Activated naive CD8-positive, alpha-beta T cell treated with anti-CD3 and anti-CD28 coated beads, Interleukin-2, amount 10 ng/mL, durations not matched to agents 7 days and 5 days (primary cell): ENCODE measurements at regions of chr11 and their contacts with region 1.

Region 1: GRCh38 chr11:61332797-61333549 is at the starts of genes DDB1 and TKFC:
- DNase-seq: peak; percentile 99
- ATAC-seq: peak; percentile 93
- H3K4me3 Mint-ChIP-seq: peak within 1 kb of the TSS; percentile 98
- H3K27ac Mint-ChIP-seq: peak within 1 kb of the TSS; percentile 99
- H3K4me1 Mint-ChIP-seq: peaks cover 59% of the 10 kb centered on the region
- H3K27me3 Mint-ChIP-seq: no peaks in the 10 kb centered on the region
- total RNA-seq, gene DDB1: 168 to 181 TPM
- total RNA-seq, gene TKFC: 31.5 to 34.3 TPM

Region 2: DNA sequence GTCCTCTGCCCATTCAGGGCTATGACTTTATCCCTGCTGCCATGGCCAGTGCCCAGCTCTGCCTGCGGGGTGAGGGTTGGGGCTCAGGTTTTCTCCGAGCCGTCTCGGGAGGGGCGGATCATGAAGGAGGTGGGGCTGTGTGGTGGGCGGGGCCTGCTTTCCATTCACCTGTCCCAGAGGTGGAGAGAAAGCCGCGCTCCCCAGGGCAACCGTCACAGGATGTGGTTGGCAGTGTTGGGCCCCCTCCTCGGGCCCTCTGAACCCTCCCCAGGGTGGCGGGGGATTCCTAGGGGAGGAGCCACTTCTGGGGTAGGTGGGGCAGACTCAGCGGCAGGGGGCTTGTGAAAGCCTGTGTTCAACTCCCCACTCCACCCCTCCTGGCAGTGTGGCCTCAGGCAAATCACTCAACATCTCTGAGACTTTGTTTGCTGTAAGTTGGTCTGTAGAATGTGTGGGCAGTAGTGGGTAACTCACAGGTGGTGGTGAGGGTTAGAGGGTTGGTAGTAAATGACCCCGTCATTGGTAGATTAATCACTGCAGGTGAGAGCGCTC is 311.2 kb before region 1 on chr11:
- POLR2A ChIA-PET with region 1: no interaction called
- DNase-seq: peak; percentile 80
- ATAC-seq: peak; percentile 51
- H3K4me3 Mint-ChIP-seq: peak overlapping the region; percentile 70
- H3K27ac Mint-ChIP-seq: peak overlapping the region; percentile 90
- H3K4me1 Mint-ChIP-seq: peaks cover 67% of the 10 kb centered on the region
- H3K27me3 Mint-ChIP-seq: no peaks in the 10 kb centered on the region

Region 3: GRCh38 chr11:61071208-61071681 is 261.7 kb before region 1 on chr11:
- POLR2A ChIA-PET with region 1: no interaction called
- DNase-seq: peak; percentile 78
- ATAC-seq: peak; percentile 97
- H3K4me3 Mint-ChIP-seq: peak overlapping the region; percentile 78
- H3K27ac Mint-ChIP-seq: peak overlapping the region; percentile 94
- H3K4me1 Mint-ChIP-seq: peaks cover 71% of the 10 kb centered on the region
- H3K27me3 Mint-ChIP-seq: no peaks in the 10 kb centered on the region

Region 4: GRCh38 chr11:61152816-61153592 is 180.0 kb before region 1 on chr11:
- POLR2A ChIA-PET with region 1: no interaction called
- DNase-seq: no peak
- ATAC-seq: no peak
- H3K4me3 Mint-ChIP-seq: no peak overlapping the region
- H3K27ac Mint-ChIP-seq: no peak overlapping the region
- H3K4me1 Mint-ChIP-seq: peaks cover under 1% of the 10 kb centered on the region
- H3K27me3 Mint-ChIP-seq: peaks cover 2% of the 10 kb centered on the region

Region 5: GRCh38 chr11:61270354-61271076 is 62.5 kb before region 1 on chr11:
- POLR2A ChIA-PET with region 1: no interaction called
- DNase-seq: no peak
- ATAC-seq: no peak
- H3K4me3 Mint-ChIP-seq: no peak overlapping the region
- H3K27ac Mint-ChIP-seq: no peak overlapping the region
- H3K4me1 Mint-ChIP-seq: no peaks in the 10 kb centered on the region
- H3K27me3 Mint-ChIP-seq: no peaks in the 10 kb centered on the region

Region 6: GRCh38 chr11:61294717-61295595 is 38.0 kb before region 1 on chr11 and contains the start of gene VWCE:
- POLR2A ChIA-PET with region 1: interaction called, 11 read pairs
- DNase-seq: peak; percentile 85
- ATAC-seq: peak; percentile 85
- H3K4me3 Mint-ChIP-seq: peak within 1 kb of the TSS; percentile 85
- H3K27ac Mint-ChIP-seq: peak within 1 kb of the TSS; percentile 81
- H3K4me1 Mint-ChIP-seq: peaks cover 37% of the 10 kb centered on the region
- H3K27me3 Mint-ChIP-seq: no peaks in the 10 kb centered on the region
- total RNA-seq, gene VWCE: 2.4 to 3.1 TPM

Region 7: DNA sequence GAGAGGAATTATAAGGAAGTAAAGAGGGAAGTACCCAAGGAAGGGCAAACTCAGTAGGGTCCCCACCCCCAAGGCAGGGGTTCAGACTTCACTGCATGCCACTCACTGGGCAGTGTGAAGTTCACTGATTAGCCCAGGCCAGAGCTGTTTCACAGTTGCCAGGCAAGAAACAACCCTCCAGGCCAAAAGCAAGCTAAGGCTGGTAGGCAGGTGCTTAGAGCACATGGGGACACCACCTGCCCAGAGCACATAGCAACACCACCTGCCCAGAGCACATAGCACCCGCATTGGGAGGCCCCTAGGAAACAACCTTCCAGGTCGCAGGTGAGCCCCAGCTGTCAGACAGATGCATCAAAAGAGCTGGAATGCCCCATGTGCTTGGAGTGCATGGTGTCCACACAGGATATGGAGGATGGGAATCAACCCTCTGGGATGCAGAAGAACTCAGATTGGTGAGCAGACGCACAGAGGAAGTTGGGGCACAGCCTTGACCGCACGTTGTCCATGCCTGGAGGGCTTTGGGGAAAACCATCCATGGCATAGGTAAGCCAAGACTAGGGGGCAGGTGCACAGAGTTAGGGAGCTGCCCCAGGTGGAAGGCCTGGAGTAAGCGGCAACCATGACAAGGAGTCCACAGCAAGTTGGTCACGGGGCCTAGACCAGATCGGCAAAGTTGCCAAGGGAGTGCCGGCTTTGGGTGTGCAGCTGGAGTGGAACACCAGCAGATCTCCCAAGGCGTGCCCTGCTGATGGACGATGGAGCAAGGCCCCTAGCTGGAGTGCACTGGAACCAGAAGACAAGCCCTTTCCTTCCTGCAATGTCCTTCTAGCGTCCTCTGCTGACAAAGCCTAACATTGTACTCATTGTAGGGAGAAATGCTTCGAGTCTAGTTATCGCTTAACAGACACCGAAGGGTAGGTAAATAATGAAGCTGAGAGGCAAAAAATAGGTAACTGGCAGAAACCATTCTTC is 51.6 kb after region 1 on chr11:
- POLR2A ChIA-PET with region 1: interaction called, 28 read pairs
- DNase-seq: no peak
- ATAC-seq: no peak
- H3K4me3 Mint-ChIP-seq: no peak overlapping the region
- H3K27ac Mint-ChIP-seq: no peak overlapping the region
- H3K4me1 Mint-ChIP-seq: peaks cover 3% of the 10 kb centered on the region
- H3K27me3 Mint-ChIP-seq: no peaks in the 10 kb centered on the region

Region 8: GRCh38 chr11:61392981-61393595 is 60.1 kb after region 1 on chr11:
- POLR2A ChIA-PET with region 1: interaction called, 26 read pairs
- DNase-seq: no peak
- ATAC-seq: peak; percentile 25
- H3K4me3 Mint-ChIP-seq: peak overlapping the region; percentile 91
- H3K27ac Mint-ChIP-seq: peak overlapping the region; percentile 90
- H3K4me1 Mint-ChIP-seq: peaks cover 22% of the 10 kb centered on the region
- H3K27me3 Mint-ChIP-seq: no peaks in the 10 kb centered on the region